ENCODE measurements at regions of chr20 and their contacts with region 1.

Region 1: DNA sequence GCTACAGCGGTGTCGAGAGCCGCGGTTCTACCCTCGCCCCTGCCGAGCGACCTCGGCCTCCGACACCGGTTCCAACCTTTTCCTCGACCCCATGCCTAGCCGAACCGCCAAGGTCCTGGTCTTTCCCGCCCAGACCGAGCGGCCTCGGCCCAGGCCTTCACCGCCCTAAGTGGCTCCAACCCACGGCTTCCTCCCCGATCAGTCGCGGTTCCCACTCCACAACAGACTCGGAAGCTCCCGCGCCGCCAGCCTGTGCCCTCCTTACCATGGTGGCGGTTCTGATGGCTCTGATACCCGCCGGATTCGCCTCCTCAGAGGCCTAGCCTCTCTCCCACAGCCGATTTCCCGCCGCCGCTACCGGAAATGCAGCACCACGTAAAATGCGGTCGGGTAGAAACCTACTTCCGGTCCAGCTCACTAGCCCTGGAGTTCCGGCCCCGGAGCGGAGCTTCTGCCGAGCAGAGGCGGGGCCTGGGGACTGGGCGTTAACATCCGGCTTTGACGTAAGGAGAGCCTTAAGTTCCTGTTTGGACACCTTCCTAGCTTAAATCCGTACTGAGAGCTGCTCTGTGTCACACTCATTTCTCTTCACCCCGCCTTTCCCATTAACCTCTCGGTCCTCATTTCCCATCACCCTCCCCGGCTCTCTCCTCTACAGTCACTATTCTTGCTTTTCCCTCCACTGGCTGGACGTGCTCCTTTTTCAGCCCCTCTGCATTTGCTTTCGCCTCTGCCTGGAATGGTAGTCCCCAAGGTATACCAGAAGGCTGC is at the start of gene SNRPB:
- DNase-seq: peak; percentile 98
- H3K4me3 Mint-ChIP-seq: peak within 1 kb of the TSS; percentile 100
- H3K27ac Mint-ChIP-seq: peak within 1 kb of the TSS; percentile 100
- H3K4me1 Mint-ChIP-seq: peaks cover 43% of the 10 kb centered on the region
- H3K27me3 Mint-ChIP-seq: no peaks in the 10 kb centered on the region
- total RNA-seq, gene SNRPB: 452 TPM

Region 2: GRCh38 chr20:2101865-2102584 is 368.6 kb before region 1 on chr20:
- CTCF ChIA-PET with region 1: no interaction called
- POLR2A ChIA-PET with region 1: interaction called, 5 read pairs
- intact Hi-C with region 1: loop called (anchors 2 kb)
- DNase-seq: peak; percentile 92
- H3K4me3 Mint-ChIP-seq: peak overlapping the region; percentile 77
- H3K27ac Mint-ChIP-seq: peak overlapping the region; percentile 99
- H3K4me1 Mint-ChIP-seq: peaks cover 42% of the 10 kb centered on the region
- H3K27me3 Mint-ChIP-seq: no peaks in the 10 kb centered on the region

Region 3: GRCh38 chr20:2416541-2417212 is 53.9 kb before region 1 on chr20:
- CTCF ChIA-PET with region 1: no interaction called
- POLR2A ChIA-PET with region 1: no interaction called
- intact Hi-C with region 1: no loop called
- DNase-seq: no peak
- H3K4me3 Mint-ChIP-seq: no peak overlapping the region
- H3K27ac Mint-ChIP-seq: no peak overlapping the region
- H3K4me1 Mint-ChIP-seq: no peaks in the 10 kb centered on the region
- H3K27me3 Mint-ChIP-seq: no peaks in the 10 kb centered on the region

Region 4: DNA sequence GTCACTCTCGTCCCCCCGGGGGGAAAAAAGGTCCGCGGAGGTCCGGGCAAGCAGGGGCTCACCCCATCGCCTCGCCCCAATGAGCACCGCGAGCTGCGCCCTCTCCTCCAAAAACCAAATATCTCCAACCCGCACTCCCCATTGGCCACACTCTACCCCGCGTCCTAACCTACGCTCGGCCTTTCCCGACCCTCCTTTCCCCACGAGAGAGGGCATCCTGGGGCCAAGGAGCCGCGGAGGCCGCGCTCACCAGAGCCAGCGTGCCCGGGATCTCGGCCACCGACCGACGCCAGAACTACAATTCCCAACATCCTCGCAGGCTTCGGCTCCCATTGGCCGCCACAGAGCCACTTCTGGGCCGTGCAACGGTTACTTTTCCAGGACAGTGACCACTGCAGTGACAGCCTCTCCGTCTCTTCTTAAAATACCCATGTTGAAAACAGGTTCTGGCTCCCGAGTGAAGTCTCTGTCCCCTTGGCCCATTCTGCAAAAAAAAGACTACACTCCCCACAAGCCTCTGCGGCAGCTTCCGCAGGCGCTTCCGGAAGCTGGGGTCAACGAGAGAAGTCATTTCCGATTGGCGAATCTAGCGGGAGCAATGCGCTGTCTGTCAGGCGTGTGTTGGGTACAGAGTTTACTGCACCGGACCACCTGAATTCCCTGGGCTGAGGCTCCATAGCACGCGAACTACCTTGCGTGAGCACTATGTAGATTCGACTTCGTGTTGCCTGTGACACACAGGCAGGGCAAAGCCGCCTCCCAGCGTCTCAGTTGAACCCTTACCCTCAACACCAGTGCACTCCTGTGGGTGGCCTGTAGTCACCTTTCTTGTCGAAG is 38.2 kb after region 1 on chr20 and contains the start of gene ZNF343:
- CTCF ChIA-PET with region 1: interaction called, 6 read pairs
- POLR2A ChIA-PET with region 1: interaction called, 10 read pairs
- intact Hi-C with region 1: loop called (anchors 1 kb)
- DNase-seq: peak; percentile 86
- H3K4me3 Mint-ChIP-seq: peak within 1 kb of the TSS; percentile 100
- H3K27ac Mint-ChIP-seq: peak within 1 kb of the TSS; percentile 94
- H3K4me1 Mint-ChIP-seq: peaks cover 17% of the 10 kb centered on the region
- H3K27me3 Mint-ChIP-seq: peaks cover 8% of the 10 kb centered on the region
- total RNA-seq, gene ZNF343: 6.8 to 6.9 TPM

Region 5: GRCh38 chr20:2651772-2652723 is 181.4 kb after region 1 on chr20 and contains the start of gene NOP56:
- CTCF ChIA-PET with region 1: interaction called, 3 read pairs
- POLR2A ChIA-PET with region 1: interaction called, 12 read pairs
- intact Hi-C with region 1: loop called (anchors 2 kb)
- DNase-seq: peak; percentile 95
- H3K4me3 Mint-ChIP-seq: peak within 1 kb of the TSS; percentile 90
- H3K27ac Mint-ChIP-seq: peak within 1 kb of the TSS; percentile 93
- H3K4me1 Mint-ChIP-seq: peaks cover 49% of the 10 kb centered on the region
- H3K27me3 Mint-ChIP-seq: no peaks in the 10 kb centered on the region
- total RNA-seq, gene NOP56: 402 to 408 TPM

Region 6: DNA sequence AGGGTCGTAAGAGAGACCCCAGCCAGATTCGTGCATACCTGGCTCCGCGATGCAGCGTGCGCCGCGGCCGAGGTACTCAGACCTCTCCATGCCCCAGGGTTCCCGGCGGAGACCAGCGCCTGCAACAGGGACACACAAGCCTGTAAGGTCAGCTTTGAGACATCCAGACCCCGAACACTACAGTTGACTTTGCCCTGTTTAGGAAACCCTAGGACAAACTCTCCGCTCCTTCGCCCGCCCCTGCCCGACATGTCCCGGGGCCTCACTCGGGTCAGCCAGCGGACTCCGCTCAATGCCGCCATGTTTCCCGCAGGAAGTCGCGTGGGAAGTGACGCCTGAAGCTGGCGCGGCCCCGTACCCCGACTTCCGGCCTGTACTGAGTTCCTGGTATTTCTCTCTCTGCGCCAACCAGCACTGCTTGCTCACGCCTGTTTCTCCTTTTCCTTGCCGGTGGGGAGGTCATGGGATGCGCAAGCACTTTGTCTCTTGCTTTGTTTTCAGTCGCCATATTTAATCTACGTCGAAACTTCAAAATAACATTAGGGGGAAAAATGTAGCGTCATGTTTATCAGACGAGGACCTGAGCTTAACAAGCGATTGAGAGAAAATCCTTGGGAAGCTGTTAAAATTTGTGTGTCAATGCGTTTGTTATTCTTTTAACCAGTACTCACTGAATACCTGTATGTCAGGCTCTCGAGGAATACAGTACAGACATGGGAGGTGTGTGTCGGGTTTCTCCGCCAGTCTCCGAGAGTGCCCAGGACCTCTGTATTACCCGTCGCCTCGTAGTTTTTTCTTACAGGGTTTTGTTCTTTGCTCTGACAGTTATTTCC is 193.5 kb after region 1 on chr20 and contains the start of gene IDH3B:
- CTCF ChIA-PET with region 1: no interaction called
- POLR2A ChIA-PET with region 1: no interaction called
- intact Hi-C with region 1: loop called (anchors 1 kb)
- DNase-seq: peak; percentile 97
- H3K4me3 Mint-ChIP-seq: peak within 1 kb of the TSS; percentile 79
- H3K27ac Mint-ChIP-seq: peak within 1 kb of the TSS; percentile 94
- H3K4me1 Mint-ChIP-seq: peaks cover 20% of the 10 kb centered on the region
- H3K27me3 Mint-ChIP-seq: no peaks in the 10 kb centered on the region
- total RNA-seq, gene IDH3B: 95.6 to 99.1 TPM

Region 7: DNA sequence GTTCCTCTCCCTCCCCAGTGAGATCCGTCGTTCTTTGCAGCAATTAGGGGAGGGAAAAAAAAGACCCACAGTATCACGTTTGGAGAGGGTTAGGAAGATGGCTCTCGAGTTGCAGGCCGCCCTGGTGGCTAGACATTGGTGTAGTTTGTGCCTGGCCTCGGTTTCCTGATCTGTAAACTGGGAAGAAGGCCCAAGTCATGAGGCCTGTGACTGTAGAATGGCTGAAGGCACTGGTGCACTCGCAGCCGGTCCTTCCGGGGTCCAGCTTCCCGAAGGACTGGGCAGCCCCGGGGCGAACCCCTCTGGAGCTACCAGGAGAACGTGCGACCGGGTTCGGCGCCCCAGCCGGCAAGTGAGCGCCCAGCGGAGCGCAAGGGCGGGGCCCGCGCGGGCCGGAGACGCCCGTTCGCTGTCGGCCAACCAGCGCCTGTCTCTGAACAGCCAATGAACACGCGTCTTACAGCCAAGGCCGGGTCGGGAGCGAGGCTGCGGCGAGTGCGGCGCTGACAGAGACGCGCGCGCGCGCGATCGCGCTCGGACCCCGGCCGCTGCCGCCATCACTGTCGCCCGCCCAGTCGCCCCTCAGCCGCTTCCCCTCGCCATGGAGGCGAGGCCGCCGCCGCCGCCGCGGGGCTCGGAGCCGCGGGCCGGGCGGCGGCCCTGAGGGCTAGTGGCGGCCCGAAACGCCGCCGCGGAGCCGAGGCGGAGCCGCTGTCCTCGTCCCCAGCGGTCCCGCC is 402.6 kb after region 1 on chr20 and contains the start of gene PTPRA:
- CTCF ChIA-PET with region 1: no interaction called
- POLR2A ChIA-PET with region 1: no interaction called
- intact Hi-C with region 1: loop called (anchors 1 kb)
- DNase-seq: peak; percentile 95
- H3K4me3 Mint-ChIP-seq: peak within 1 kb of the TSS; percentile 90
- H3K27ac Mint-ChIP-seq: peak within 1 kb of the TSS; percentile 91
- H3K4me1 Mint-ChIP-seq: peaks cover 43% of the 10 kb centered on the region
- H3K27me3 Mint-ChIP-seq: no peaks in the 10 kb centered on the region
- total RNA-seq, gene PTPRA: 61.1 to 62.8 TPM

Region 8: GRCh38 chr20:2932498-2932897 is 461.9 kb after region 1 on chr20:
- CTCF ChIA-PET with region 1: no interaction called
- POLR2A ChIA-PET with region 1: no interaction called
- intact Hi-C with region 1: no loop called
- DNase-seq: no peak
- H3K4me3 Mint-ChIP-seq: no peak overlapping the region
- H3K27ac Mint-ChIP-seq: no peak overlapping the region
- H3K4me1 Mint-ChIP-seq: peaks cover 3% of the 10 kb centered on the region
- H3K27me3 Mint-ChIP-seq: no peaks in the 10 kb centered on the region